ENCODE measurements at regions of chr1 and their contacts with region 1.

Region 1: GRCh38 chr1:203663294-203663693 is 36.7 kb downstream of the ATP2B4 start:
- DNase-seq: no peak
- ATAC-seq: peak; percentile 72
- H3K4me3 ChIP-seq: no peak overlapping the region
- H3K27ac ChIP-seq: no peak overlapping the region
- H3K4me1 ChIP-seq: no peaks in the 10 kb centered on the region
- H3K27me3 ChIP-seq: peaks cover 0 to 2% of the 10 kb centered on the region in 2 experiments; a peak in 2 of 4 replicates
- CTCF ChIP-seq: no peak
- EP300 ChIP-seq: no peak
- POLR2A ChIP-seq: no peak
- RAD21 ChIP-seq: no peak

Region 2: DNA sequence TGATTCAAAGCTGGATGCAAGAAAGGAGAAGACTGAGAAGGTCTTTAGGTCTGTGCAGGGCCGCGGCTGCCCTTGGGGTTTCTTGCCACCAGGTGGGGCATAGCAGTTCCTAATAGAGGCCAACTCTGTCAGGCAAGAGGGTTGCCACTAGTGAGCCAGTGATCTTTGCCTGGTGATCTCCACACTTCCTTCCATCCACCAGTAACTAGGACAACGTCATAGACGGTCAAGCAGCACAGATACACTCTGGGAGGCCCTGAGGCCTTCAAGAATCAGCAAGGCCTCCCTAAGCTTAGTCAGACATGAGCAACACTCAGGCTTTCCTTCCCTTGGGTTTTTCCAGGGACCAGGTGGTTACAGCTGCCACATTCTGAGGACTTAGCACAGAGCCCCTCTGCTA is 69.6 kb before region 1 on chr1:
- CTCF ChIA-PET with region 1: no interaction called
- POLR2A ChIA-PET with region 1: no interaction called
- RAD21 ChIA-PET with region 1: no interaction called
- SMC1A ChIA-PET with region 1: no interaction called
- in situ Hi-C with region 1: no loop called
- intact Hi-C with region 1: no loop called
- DNase-seq: no peak
- ATAC-seq: peak; percentile 91
- H3K4me3 ChIP-seq: no peak overlapping the region
- H3K27ac ChIP-seq: no peak overlapping the region
- H3K4me1 ChIP-seq: no peaks in the 10 kb centered on the region
- H3K27me3 ChIP-seq: peaks cover 1 to 3% of the 10 kb centered on the region in 2 experiments; a peak in 1 of 4 replicates
- CTCF ChIP-seq: peak; percentile 39 to 54 (median 49); a peak in 5 of 6 replicates
- EP300 ChIP-seq: no peak
- POLR2A ChIP-seq: no peak
- RAD21 ChIP-seq: peak; percentile 41

Region 3: DNA sequence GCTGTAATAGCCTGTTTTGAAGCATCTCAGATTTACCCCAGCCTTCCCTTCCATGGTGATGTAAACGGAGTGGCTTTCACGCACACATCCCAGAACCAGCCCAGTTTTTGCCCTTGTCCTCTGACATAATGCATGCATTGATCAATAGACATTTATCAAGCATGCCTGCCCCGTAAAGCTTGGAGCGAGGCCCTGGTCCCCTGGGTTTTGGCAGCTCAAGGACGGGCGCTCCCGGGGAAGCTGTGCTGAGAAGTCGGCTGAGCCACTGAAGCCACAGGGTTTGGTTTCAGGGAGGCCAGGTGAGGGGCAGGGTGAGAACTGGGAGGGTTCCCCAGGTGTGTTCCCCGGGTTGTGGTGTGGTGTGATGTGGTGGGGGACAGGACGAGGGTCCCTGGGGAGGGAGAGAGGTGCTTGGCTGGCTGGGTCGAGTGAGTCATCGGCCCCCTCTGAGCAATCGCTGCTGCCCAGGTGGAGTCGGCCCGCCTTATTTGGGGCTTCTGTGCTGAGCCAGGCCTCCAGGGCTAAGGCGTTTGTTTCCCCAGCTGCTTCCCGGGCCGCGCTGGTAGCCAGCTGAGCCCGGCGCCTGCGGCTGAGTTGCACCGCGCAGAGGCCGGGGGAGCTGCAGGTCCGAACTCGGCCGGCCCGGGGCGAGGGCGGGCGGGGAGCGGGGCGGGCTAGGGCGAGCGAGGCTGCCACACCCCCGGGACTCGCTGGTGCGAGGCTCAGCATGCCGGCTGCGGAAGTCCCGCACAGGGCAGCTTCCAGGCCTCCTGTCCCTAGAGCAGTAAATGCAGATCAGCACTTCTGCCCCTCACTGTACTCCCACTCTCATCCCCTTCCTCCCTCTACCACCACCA is 13.1 kb before region 1 on chr1:
- CTCF ChIA-PET with region 1: interaction called, 5 read pairs
- POLR2A ChIA-PET with region 1: interaction called, 3 read pairs
- RAD21 ChIA-PET with region 1: interaction called, 9 read pairs
- SMC1A ChIA-PET with region 1: interaction called, 19 read pairs
- in situ Hi-C with region 1: no loop called
- intact Hi-C with region 1: no loop called
- DNase-seq: no peak
- ATAC-seq: peak; percentile 86
- H3K4me3 ChIP-seq: peak overlapping the region; percentile 12; the same call in 1 of the 2 replicates
- H3K27ac ChIP-seq: no peak overlapping the region; the same call in 1 of the 2 replicates
- H3K4me1 ChIP-seq: peaks cover 37% of the 10 kb centered on the region
- H3K27me3 ChIP-seq: no peaks in the 10 kb centered on the region
- CTCF ChIP-seq: no peak
- EP300 ChIP-seq: peak in 1 of 2 experiments; percentile 16; a peak in 1 of 4 replicates
- POLR2A ChIP-seq: no peak
- RAD21 ChIP-seq: no peak

Region 4: GRCh38 chr1:204207136-204207616 is 543.9 kb after region 1 on chr1:
- CTCF ChIA-PET with region 1: no interaction called
- POLR2A ChIA-PET with region 1: no interaction called
- RAD21 ChIA-PET with region 1: no interaction called
- SMC1A ChIA-PET with region 1: no interaction called
- in situ Hi-C with region 1: no loop called
- intact Hi-C with region 1: no loop called
- DNase-seq: no peak
- ATAC-seq: peak; percentile 98
- H3K4me3 ChIP-seq: no peak overlapping the region
- H3K27ac ChIP-seq: no peak overlapping the region
- H3K4me1 ChIP-seq: no peaks in the 10 kb centered on the region
- H3K27me3 ChIP-seq: peaks cover 0 to 8% of the 10 kb centered on the region in 2 experiments; a peak in 2 of 4 replicates
- CTCF ChIP-seq: peak; percentile 79 to 94 (median 90)
- EP300 ChIP-seq: no peak
- POLR2A ChIP-seq: no peak
- RAD21 ChIP-seq: peak; percentile 52

Measured in GM12878 (cell line).